ENCODE measurements at regions of chr19 and their contacts with region 1.

Region 1: GRCh38 chr19:29735800-29736199 is 20.7 kb upstream of the C19orf12 start:
- DNase-seq: no peak
- ATAC-seq: no peak
- H3K4me3 ChIP-seq: no peak overlapping the region
- H3K4me3 Mint-ChIP-seq: no peak overlapping the region
- H3K27ac ChIP-seq: no peak overlapping the region
- H3K27ac Mint-ChIP-seq: no peak overlapping the region
- H3K4me1 ChIP-seq: no peaks in the 10 kb centered on the region
- H3K4me1 Mint-ChIP-seq: no peaks in the 10 kb centered on the region
- H3K27me3 ChIP-seq: no peaks in the 10 kb centered on the region
- H3K27me3 Mint-ChIP-seq: peaks cover 4% of the 10 kb centered on the region
- CTCF ChIP-seq: no peak

Region 2: DNA sequence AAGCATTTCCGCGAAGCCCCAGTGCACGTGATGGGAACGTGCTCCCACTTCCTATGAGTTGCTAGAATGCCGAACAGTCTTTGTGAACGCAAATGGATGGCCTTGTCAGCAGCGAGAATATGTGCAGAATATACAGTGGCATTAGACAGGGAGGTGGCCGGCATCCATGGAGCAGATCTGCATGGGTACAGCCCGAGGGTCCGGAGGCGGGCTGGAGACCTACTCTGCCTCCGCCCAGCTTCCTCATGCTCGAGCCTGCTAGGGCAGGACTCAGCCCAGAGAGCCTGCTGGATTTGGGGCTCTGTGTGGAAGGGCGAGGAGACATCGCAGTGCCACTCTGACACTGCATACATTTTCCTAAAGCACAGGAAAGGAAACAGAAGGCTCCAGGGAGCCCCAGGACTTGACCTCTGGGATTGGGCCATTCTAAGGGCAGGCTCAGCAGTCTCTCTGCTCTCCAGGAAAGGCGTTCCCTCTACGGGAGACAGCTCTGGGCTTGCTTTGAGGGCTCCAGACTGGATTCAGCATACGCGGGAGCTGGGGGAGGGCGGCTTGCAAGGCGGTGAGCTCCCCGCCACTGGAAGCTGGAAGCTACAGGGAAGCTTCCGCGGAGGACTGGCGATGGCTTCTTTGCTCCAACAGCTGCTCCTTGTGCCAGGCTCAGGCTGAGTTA is 466.9 kb before region 1 on chr19:
- CTCF ChIA-PET with region 1: no interaction called
- POLR2A ChIA-PET with region 1: no interaction called
- intact Hi-C with region 1: no loop called
- DNase-seq: peak in 1 of 9 experiments; percentile 23
- ATAC-seq: no peak
- H3K4me3 ChIP-seq: no peak overlapping the region
- H3K4me3 Mint-ChIP-seq: no peak overlapping the region
- H3K27ac ChIP-seq: no peak overlapping the region
- H3K27ac Mint-ChIP-seq: no peak overlapping the region
- H3K4me1 ChIP-seq: no peaks in the 10 kb centered on the region
- H3K4me1 Mint-ChIP-seq: no peaks in the 10 kb centered on the region
- H3K27me3 ChIP-seq: peaks cover 0 to 3% of the 10 kb centered on the region in 2 experiments
- H3K27me3 Mint-ChIP-seq: peaks cover 30% of the 10 kb centered on the region
- CTCF ChIP-seq: no peak

Region 3: GRCh38 chr19:29779921-29780320 is 44.1 kb after region 1 on chr19:
- CTCF ChIA-PET with region 1: interaction called, 10 read pairs
- POLR2A ChIA-PET with region 1: no interaction called
- intact Hi-C with region 1: no loop called
- DNase-seq: peak in 1 of 9 experiments; percentile 34
- ATAC-seq: peak; percentile 34
- H3K4me3 ChIP-seq: no peak overlapping the region
- H3K4me3 Mint-ChIP-seq: no peak overlapping the region
- H3K27ac ChIP-seq: no peak overlapping the region
- H3K27ac Mint-ChIP-seq: no peak overlapping the region
- H3K4me1 ChIP-seq: no peaks in the 10 kb centered on the region
- H3K4me1 Mint-ChIP-seq: no peaks in the 10 kb centered on the region
- H3K27me3 ChIP-seq: no peaks in the 10 kb centered on the region
- H3K27me3 Mint-ChIP-seq: peaks cover 5% of the 10 kb centered on the region
- CTCF ChIP-seq: no peak

Region 4: DNA sequence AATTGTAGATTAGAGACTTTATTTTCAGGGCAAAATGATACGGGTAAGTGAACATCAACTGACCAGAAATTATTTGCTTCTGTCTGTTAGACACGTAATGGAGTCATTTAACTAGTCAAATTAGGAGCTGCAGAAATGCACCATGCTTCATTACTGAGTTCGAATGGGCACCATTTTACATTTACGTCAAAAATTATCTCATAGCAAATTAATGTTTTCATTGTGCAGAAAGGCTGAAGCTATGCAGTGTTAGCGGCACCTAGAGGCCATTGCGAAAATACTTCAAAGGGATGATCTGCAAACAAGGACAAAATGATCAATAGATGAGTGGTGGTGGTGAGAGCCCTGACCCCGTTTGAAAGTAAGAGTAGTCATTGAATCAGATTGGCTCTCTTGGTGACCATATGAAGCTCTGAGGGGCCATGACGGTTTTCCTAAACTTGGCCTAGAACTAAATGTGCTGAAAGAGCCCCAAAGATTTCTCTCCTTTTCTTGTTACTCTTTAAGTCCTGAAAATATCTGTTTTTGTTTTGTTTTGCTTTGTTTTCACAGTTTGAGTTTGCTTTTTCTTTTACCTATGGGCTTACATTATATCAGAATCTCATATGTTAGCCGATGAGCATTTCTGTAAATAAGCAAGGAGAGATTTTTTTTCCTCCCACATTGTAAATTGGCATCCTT is 914.3 kb after region 1 on chr19:
- CTCF ChIA-PET with region 1: no interaction called
- POLR2A ChIA-PET with region 1: no interaction called
- intact Hi-C with region 1: loop called in 1 of 2 experiments (anchors 2 kb)
- DNase-seq: peak in 3 of 9 experiments; percentile 24 to 39 (median 36)
- ATAC-seq: no peak
- H3K4me3 ChIP-seq: no peak overlapping the region
- H3K4me3 Mint-ChIP-seq: no peak overlapping the region
- H3K27ac ChIP-seq: no peak overlapping the region
- H3K27ac Mint-ChIP-seq: no peak overlapping the region
- H3K4me1 ChIP-seq: no peaks in the 10 kb centered on the region
- H3K4me1 Mint-ChIP-seq: no peaks in the 10 kb centered on the region
- H3K27me3 ChIP-seq: peaks cover 0 to 4% of the 10 kb centered on the region in 2 experiments
- H3K27me3 Mint-ChIP-seq: peaks cover 29% of the 10 kb centered on the region
- CTCF ChIP-seq: peak; percentile 46

Measured in CD8-positive, alpha-beta T cell (primary cell).